ENCODE measurements at regions of chr12 and their contacts with region 1.

Region 1: GRCh38 chr12:111685744-111686517 is at the starts of genes ACAD10 and BRAP:
- DNase-seq: peak; percentile 97
- H3K4me3 Mint-ChIP-seq: peak within 1 kb of the TSS; percentile 97
- H3K27ac Mint-ChIP-seq: peak within 1 kb of the TSS; percentile 98
- H3K4me1 Mint-ChIP-seq: peaks cover 36% of the 10 kb centered on the region
- H3K27me3 Mint-ChIP-seq: no peaks in the 10 kb centered on the region
- CTCF ChIP-seq: no peak
- total RNA-seq, gene ACAD10: 38.1 and 50.8 TPM in 2 replicates
- total RNA-seq, gene BRAP: 17.8 and 24.0 TPM in 2 replicates

Region 2: DNA sequence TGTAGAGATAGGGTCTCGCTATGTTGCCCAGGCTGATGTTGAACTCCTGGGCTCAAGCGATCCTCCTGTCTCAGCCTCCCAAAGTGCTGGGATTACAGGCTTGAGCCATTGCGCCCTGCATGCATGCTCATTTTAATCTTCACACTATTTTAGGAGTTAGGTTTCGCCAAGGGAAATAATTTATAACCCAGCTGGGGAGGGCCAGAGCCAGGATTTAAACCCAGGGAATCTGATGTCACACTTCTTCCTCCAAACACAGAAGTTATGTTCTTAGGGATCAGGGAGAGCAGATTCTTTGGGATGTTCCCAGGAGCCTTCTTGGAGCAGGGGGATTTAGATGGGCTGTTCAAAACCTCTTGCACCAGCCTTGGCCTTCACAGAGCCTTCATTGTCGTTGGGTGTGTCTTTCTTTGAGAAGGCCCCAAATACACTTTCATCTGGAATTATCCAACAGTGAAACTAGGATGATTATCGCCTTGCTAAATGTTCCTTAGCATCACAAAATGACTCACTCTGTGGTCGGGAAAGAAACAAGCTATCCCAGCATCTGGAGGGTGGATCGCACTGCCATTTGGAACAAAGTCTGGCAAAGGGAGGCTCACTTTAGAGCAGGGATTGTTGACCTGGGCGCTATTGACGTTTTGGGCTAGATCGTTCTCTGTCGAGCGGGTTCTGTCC is 935.0 kb before region 1 on chr12:
- CTCF ChIA-PET with region 1: interaction called, 10 read pairs
- intact Hi-C with region 1: no loop called
- DNase-seq: no peak
- H3K4me3 Mint-ChIP-seq: no peak overlapping the region
- H3K27ac Mint-ChIP-seq: no peak overlapping the region
- H3K4me1 Mint-ChIP-seq: no peaks in the 10 kb centered on the region
- H3K27me3 Mint-ChIP-seq: no peaks in the 10 kb centered on the region
- CTCF ChIP-seq: no peak

Region 3: DNA sequence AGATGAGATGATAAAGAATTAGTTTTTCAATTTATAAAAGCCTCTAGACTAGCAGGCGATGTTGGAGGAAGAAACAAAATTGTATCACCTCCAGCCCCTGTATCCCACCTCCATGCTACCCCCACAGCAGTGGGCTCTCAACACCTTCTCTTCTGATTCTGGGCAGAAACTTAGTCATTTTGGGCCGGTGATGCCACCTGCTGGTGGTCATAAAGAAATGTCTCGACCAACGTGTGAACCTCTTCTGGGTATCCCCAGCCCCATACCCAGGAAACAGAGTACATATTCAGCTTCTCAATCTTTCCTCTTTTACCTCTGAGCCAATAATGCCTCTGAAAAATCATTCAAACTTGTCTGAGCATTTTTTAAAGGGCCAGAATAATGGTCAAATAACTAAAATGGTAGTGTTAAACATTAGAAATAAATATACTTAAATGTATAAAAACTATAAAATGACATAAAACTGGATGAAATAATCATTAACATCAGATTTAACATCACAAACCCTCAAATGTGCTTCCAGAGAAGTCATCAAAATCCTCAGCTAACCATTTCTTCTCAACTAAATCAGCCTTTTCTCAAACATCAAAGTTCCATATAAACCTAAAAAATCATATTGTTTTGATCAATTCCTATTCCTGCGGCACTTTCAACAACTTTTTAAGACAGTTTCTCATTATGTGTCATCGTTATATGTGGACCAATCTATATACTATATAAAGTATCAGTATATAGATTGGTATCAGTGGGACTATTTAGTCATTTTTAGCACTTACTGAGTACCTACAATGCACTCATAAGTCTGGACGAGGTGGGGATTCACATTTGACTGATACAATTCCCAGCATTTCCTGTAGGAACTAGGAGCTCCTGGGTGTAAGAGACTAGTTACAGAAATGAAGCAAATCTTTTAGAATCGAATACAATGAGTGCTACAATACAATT is 156.2 kb before region 1 on chr12:
- CTCF ChIA-PET with region 1: no interaction called
- intact Hi-C with region 1: no loop called
- DNase-seq: peak; percentile 68
- H3K4me3 Mint-ChIP-seq: no peak overlapping the region
- H3K27ac Mint-ChIP-seq: no peak overlapping the region
- H3K4me1 Mint-ChIP-seq: no peaks in the 10 kb centered on the region
- H3K27me3 Mint-ChIP-seq: no peaks in the 10 kb centered on the region
- CTCF ChIP-seq: peak; percentile 71

Region 4: DNA sequence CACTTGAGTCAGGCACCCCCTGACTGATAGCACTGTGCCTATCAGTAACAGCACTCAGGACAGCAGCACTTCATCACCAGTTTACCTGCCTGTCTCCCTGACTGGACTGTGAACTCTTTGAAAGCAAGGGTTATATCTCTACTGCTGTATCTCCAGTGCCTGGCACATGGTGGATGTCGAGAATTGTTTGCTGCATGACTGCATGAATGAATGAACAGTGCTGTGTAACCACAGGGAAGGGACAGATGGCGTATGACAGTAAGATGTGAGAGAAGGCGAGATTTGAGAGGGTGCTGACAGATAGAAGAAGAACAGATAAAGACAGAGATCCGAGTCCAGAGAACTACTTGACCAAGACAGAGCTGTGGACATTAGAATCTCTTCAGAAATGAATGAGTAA is 29.9 kb before region 1 on chr12:
- CTCF ChIA-PET with region 1: no interaction called
- intact Hi-C with region 1: no loop called
- DNase-seq: no peak
- H3K4me3 Mint-ChIP-seq: no peak overlapping the region
- H3K27ac Mint-ChIP-seq: no peak overlapping the region
- H3K4me1 Mint-ChIP-seq: no peaks in the 10 kb centered on the region
- H3K27me3 Mint-ChIP-seq: no peaks in the 10 kb centered on the region
- CTCF ChIP-seq: no peak

Region 5: DNA sequence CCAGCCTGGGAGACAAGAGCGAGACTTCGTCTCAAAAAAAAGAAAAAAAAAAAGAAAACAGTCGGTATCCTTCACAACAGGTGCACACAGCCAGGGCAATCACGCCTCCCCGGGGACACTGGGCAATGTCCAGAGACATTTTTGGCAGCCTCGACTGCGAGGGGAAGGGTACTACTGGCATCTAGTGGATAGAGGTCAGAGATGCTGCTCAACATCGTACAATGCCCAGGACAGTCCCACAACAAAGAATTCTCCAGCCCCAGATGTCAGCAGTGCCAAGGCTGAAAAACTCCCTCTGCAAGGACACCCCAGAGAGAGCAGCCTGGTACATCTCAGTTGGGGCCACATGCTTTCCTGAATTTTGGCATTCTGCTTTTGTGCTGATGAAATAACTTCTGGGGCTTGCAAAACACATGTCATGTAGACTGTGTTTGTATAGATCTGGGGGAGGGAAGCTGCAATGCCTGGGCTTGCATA is 102.3 kb after region 1 on chr12:
- CTCF ChIA-PET with region 1: no interaction called
- intact Hi-C with region 1: loop called (anchors 10 kb)
- DNase-seq: peak; percentile 52
- H3K4me3 Mint-ChIP-seq: no peak overlapping the region
- H3K27ac Mint-ChIP-seq: no peak overlapping the region
- H3K4me1 Mint-ChIP-seq: no peaks in the 10 kb centered on the region
- H3K27me3 Mint-ChIP-seq: no peaks in the 10 kb centered on the region
- CTCF ChIP-seq: no peak